CD8-positive, alpha-beta T cell (primary cell): ENCODE measurements at regions of chr13 and their contacts with region 1.

Region 1: DNA sequence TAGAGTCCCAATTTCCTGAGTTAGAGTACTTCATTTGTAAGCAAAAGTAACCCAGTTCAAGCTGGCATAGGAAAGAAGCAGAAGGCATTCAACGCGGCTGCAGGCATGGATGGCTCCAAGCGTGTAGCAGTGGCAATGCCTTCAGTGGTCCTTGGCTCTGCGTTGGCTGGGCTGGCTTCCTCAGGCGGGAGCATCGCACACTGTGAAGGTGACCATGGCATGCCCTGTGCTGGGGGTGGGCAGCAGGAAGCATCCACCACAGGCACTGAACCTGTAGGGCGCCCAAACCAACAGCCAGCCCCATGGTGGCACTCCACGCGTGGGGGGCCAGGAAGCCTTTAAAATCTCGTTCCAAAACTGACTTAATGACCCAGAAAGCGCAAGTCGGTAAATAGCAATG is 53.6 kb upstream of the SPACA7 start:
- DNase-seq: no peak
- ATAC-seq: no peak
- H3K4me3 ChIP-seq: no peak overlapping the region
- H3K4me3 Mint-ChIP-seq: no peak overlapping the region
- H3K27ac ChIP-seq: no peak overlapping the region
- H3K27ac Mint-ChIP-seq: no peak overlapping the region
- H3K4me1 ChIP-seq: no peaks in the 10 kb centered on the region
- H3K4me1 Mint-ChIP-seq: no peaks in the 10 kb centered on the region
- H3K27me3 ChIP-seq: no peaks in the 10 kb centered on the region
- H3K27me3 Mint-ChIP-seq: peaks cover 3% of the 10 kb centered on the region
- CTCF ChIP-seq: no peak

Region 2: DNA sequence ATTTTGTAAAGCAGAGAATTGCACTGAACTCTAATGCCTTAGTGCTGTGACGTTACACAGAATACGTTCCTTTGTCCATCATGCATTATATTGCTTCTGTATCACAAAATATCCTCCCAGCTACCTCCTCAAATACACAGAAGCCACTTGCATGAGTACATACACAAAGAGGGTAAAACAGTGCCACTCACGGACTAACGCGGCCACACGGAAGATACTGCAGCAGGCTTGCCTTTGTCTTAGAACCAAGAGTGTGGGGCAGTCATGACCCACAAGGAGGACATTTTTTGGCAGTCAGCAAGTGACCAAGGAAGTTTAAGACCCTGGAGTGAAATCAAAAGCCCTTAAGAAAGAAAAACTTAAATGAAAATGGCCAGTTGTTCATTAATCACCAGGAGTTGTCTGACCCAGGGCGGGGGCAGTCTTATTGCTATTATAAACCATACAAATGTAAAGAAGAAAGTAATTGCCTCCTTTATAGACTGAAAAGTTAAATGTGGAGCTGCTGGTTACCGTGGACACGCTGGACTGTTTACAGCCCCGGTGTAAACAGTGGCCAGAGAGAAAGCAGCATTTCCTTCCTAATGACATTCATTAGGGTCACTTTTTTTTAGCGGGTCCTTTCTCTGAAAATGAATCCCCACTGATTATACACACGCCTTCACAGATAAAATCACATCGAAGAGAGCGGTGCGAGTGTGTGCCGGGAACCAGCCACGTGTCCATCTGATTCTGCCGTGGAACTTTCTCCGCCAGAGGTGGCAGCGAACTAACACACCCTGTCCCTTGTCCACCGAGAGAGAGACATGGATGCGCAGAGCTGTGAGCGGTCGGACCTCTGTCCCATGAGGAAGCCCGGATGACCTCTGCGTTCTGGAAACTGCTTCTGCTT is 188.8 kb before region 1 on chr13:
- CTCF ChIA-PET with region 1: no interaction called
- POLR2A ChIA-PET with region 1: no interaction called
- intact Hi-C with region 1: no loop called
- DNase-seq: peak in 1 of 9 experiments; percentile 36
- ATAC-seq: no peak
- H3K4me3 ChIP-seq: no peak overlapping the region
- H3K4me3 Mint-ChIP-seq: no peak overlapping the region
- H3K27ac ChIP-seq: no peak overlapping the region
- H3K27ac Mint-ChIP-seq: no peak overlapping the region
- H3K4me1 ChIP-seq: no peaks in the 10 kb centered on the region
- H3K4me1 Mint-ChIP-seq: no peaks in the 10 kb centered on the region
- H3K27me3 ChIP-seq: no peaks in the 10 kb centered on the region
- H3K27me3 Mint-ChIP-seq: peaks cover 5% of the 10 kb centered on the region
- CTCF ChIP-seq: no peak

Region 3: DNA sequence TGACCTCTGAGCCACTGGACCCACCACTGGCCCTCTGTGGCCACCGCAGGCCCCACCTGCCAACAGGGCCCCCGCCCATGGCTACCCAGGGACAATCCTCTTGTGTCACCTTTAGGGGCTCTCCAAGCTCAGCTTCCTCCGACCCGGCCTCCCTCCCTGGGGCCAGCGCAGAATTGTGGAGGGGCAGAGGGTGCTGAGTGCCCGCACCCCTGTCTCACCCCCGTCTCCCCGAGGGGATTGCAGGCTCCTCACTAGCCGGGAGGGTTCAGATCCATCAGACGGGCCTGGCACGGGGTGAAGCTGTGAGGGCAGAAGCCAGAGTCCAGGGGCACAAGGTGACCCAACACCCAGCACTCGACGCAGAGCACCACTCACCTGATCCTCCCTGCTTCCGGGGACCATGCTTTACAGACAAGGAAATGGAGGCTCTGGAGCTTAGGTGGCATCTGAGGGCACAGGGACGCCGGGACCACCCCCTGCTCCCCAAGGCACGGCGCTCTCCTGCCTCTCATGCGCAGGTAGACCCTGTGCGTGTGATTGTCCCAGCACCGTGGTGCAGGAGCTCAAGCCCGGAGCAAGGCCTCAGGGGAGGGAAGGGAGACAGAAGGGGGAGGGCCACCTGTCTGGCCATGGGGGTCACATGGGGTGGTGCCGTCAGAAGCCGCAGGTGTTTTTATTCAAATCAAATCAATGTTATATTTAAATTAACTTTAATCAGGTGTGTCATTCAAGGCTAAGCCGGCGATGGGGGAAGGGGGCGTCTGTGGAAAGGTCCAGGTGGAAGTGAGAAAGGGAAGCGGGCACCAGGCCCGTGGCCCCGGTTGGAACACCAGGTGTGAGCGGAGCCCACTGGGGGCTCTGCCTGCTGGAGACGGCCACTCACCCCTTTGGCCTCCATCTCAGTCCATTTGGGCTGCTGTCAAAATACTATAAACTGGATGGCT is 32.0 kb after region 1 on chr13:
- CTCF ChIA-PET with region 1: interaction called, 3 read pairs
- POLR2A ChIA-PET with region 1: no interaction called
- intact Hi-C with region 1: loop called in 1 of 2 experiments (anchors 1 kb)
- DNase-seq: no peak
- ATAC-seq: no peak
- H3K4me3 ChIP-seq: no peak overlapping the region
- H3K4me3 Mint-ChIP-seq: no peak overlapping the region
- H3K27ac ChIP-seq: no peak overlapping the region
- H3K27ac Mint-ChIP-seq: no peak overlapping the region
- H3K4me1 ChIP-seq: no peaks in the 10 kb centered on the region
- H3K4me1 Mint-ChIP-seq: no peaks in the 10 kb centered on the region
- H3K27me3 ChIP-seq: no peaks in the 10 kb centered on the region
- H3K27me3 Mint-ChIP-seq: peaks cover 10% of the 10 kb centered on the region
- CTCF ChIP-seq: no peak